PC-3 (cell line): ENCODE measurements at regions of chr1 and their contacts with region 1.

Region 1: DNA sequence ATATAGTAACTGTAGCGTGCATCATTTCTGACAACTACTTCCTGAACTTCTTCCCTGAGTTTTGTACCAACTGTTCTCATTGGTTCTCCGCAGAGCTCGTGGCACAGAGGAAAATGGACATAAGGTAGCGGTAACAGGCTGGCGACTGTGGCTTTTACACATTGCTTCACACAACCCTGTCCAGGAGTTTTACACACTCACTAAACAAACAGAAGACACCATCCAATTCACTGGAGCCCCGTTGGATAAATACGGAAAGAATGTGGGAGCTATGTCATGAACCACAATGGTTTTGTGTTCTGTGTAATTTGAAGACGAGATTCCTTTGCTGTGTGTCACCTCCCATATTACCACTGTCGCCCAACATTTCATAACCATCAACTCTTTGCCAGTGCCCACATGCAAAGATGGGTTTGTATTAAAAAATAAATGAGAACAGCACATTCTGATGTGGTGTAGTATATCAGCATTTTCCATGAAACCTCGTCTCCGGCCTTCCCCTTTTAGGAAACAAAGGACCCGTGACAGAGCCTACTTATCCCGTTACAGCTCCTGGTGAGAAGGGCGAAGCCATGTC is 47.3 kb upstream of the ENAH start:
- DNase-seq: peak; percentile 99
- ATAC-seq: peak; percentile 87
- H3K4me3 ChIP-seq: peak overlapping the region; percentile 48
- H3K27ac ChIP-seq: peak overlapping the region; percentile 80
- H3K4me1 ChIP-seq: peaks cover 37% of the 10 kb centered on the region
- H3K27me3 ChIP-seq: no peaks in the 10 kb centered on the region
- CTCF ChIP-seq: no peak

Region 2: GRCh38 chr1:225474986-225475820 is 225.0 kb before region 1 on chr1:
- CTCF ChIA-PET with region 1: no interaction called
- POLR2A ChIA-PET with region 1: no interaction called
- intact Hi-C with region 1: loop called (anchors 5 kb)
- DNase-seq: peak; percentile 82
- ATAC-seq: peak; percentile 90
- H3K4me3 ChIP-seq: no peak overlapping the region; the same call in 1 of the 2 replicates
- H3K27ac ChIP-seq: no peak overlapping the region
- H3K4me1 ChIP-seq: peaks cover 10% of the 10 kb centered on the region; the same call in 1 of the 2 replicates
- H3K27me3 ChIP-seq: no peaks in the 10 kb centered on the region
- CTCF ChIP-seq: peak; percentile 100

Region 3: DNA sequence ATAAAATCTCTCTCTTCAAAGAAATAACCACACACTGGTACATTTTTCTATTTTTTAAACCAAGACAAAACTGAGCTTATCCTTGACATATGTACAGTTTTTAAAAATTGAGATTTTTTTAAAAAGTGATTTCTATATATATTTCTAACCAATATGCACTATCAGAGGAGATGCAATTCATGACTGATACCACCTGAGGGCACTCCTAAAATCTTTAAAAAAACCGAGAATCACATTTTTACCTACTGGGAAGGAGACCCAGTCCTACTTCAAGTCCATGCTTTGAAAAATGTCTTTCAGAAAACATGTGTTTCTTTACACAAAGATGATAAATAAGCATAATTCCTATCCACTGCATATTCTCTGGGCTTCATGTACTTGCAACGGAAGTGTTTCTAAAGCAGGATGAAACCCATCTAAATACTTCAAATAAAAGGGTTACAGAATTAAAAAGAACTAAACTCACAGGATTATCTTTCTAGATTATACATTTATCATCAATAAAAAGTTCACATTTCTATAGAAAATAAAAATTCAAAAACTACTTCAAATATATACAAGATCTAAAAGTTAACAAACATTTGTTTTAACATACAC is 145.9 kb before region 1 on chr1:
- CTCF ChIA-PET with region 1: no interaction called
- POLR2A ChIA-PET with region 1: no interaction called
- intact Hi-C with region 1: loop called (anchors 1 kb)
- DNase-seq: peak; percentile 79
- ATAC-seq: peak; percentile 61; the same call in 1 of the 2 replicates
- H3K4me3 ChIP-seq: no peak overlapping the region
- H3K27ac ChIP-seq: no peak overlapping the region
- H3K4me1 ChIP-seq: no peaks in the 10 kb centered on the region
- H3K27me3 ChIP-seq: no peaks in the 10 kb centered on the region
- CTCF ChIP-seq: peak; percentile 81

Region 4: DNA sequence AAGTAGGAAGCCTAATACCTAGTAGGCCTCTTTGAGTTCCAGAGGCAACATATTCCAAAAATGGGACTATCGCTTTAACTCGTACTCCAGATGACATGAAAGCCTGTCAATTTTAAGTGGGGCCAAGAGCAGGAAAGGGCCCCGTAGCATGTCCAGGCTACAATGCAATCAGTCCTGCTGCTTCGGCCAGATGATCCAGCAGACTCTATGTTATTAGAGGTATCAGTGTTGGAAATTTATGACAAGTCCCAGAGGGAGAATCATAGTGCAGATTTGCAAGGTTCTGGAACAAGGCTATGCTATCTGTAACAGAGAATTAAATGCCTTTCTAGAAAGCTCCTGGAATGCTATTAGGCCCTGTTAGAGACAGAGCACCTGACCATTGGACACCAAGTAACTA is 20.7 kb after region 1 on chr1:
- CTCF ChIA-PET with region 1: no interaction called
- POLR2A ChIA-PET with region 1: no interaction called
- intact Hi-C with region 1: no loop called
- DNase-seq: no peak
- ATAC-seq: no peak
- H3K4me3 ChIP-seq: no peak overlapping the region
- H3K27ac ChIP-seq: no peak overlapping the region
- H3K4me1 ChIP-seq: no peaks in the 10 kb centered on the region
- H3K27me3 ChIP-seq: no peaks in the 10 kb centered on the region
- CTCF ChIP-seq: no peak

Region 5: GRCh38 chr1:225735252-225736149 is 35.2 kb after region 1 on chr1:
- CTCF ChIA-PET with region 1: no interaction called
- POLR2A ChIA-PET with region 1: no interaction called
- intact Hi-C with region 1: loop called (anchors 1 kb)
- DNase-seq: peak; percentile 95
- ATAC-seq: peak; percentile 83
- H3K4me3 ChIP-seq: 0 out of 2 replicates have a peak overlapping the region, but pooled peaks have one; percentile 4
- H3K27ac ChIP-seq: peak overlapping the region; percentile 68
- H3K4me1 ChIP-seq: peaks cover 30% of the 10 kb centered on the region
- H3K27me3 ChIP-seq: no peaks in the 10 kb centered on the region
- CTCF ChIP-seq: peak; percentile 25; the same call in 1 of the 2 replicates

Region 6: GRCh38 chr1:225754940-225755641 is 54.8 kb after region 1 on chr1:
- CTCF ChIA-PET with region 1: no interaction called
- POLR2A ChIA-PET with region 1: no interaction called
- intact Hi-C with region 1: loop called (anchors 1 kb)
- DNase-seq: peak; percentile 81
- ATAC-seq: peak; percentile 86
- H3K4me3 ChIP-seq: no peak overlapping the region
- H3K27ac ChIP-seq: peak overlapping the region; percentile 37
- H3K4me1 ChIP-seq: peaks cover 16% of the 10 kb centered on the region
- H3K27me3 ChIP-seq: no peaks in the 10 kb centered on the region
- CTCF ChIP-seq: no peak